ENCODE measurements at regions of chr19 and their contacts with region 1.

Region 1: DNA sequence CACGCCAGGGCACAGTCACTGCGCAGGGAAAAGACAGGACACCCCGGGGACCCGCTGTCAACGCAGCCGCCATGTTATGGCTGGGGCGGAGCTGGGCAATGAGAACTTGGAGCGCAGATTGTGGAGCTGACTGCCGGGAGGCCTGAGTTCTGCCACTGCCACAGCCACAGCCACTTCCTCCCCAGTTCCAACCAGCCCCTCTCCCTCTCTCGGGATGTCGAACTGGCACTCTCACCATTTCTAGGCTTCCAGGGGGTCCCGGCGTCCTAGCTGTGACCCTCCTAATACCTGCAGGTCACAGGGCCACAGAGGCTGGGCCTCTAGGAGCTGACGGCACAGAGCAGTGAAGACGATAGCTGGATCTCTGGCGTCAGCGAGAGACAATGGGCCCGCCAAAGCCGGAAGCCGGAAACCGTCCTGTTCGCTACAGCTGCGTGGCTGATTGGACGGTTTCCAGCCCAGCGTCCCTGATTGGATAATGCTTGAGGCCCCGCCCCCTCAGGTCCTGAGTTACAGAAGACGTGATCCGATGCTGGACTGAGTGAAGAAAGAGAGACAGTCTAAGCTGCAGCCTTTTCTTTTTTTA is at the start of gene ZNF506:
- DNase-seq: peak; percentile 91 to 99 (median 98)
- ATAC-seq: peak; percentile 81 to 82
- H3K4me3 Mint-ChIP-seq: peak within 1 kb of the TSS; percentile 99 to 100 (median 100)
- H3K27ac Mint-ChIP-seq: peak within 1 kb of the TSS; percentile 98 to 100 (median 100)
- H3K4me1 Mint-ChIP-seq: peaks cover 6 to 48% (median 37%) of the 10 kb centered on the region in 4 donors
- H3K27me3 Mint-ChIP-seq: no peaks in the 10 kb centered on the region
- polyA plus RNA-seq, gene ZNF506: 23.4 to 29.6 (median 27.8) TPM

Region 2: DNA sequence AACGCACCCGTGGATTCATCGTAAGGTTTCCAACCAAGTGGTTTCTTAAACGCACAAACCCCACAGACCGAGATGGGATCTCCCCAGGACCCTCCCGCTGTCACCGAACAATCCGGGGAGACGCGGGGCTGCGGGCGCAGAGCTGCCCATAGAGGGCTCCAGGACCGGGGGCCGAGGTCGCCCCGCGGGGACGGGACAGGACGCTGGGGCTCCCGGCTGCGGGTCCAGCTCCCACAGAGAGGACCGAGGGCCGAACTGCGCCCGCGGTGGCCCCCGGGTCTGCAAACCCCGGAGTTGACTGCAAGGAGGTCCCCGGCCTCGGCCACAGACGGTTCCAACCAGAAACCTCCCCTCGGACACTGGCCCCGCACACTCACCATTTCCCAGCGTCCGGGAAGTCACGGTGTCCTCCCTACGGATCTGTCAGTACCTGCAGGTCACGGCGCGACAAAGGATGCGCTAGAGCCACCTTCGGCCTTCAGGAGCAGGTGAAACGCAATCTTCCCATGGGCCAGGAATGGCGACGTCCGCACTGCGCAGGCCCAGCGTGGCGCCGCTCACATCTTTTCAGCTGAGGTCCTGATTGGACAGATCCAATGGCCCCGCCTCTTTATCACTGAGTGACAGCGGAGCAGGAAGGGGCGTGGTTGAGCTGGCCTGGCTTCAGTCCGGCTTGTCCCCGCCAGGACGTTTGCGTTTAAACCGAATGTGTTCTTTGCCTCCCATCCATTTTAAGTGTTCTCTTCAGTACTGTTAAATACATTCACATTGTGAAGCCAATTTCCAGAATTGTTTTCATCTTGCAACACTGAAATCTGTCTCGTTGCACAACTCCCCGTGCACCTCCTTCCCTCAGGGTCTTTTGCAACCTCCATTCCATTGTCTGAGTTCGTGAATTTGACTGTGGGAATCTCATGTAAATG is 88.6 kb before region 1 on chr19 and contains the start of gene ZNF14:
- POLR2A ChIA-PET with region 1: interaction called, 55 read pairs
- DNase-seq: peak; percentile 79 to 96 (median 89)
- ATAC-seq: peak; percentile 96 to 99
- H3K4me3 Mint-ChIP-seq: peak within 1 kb of the TSS; percentile 94 to 100 (median 98)
- H3K27ac Mint-ChIP-seq: peak within 1 kb of the TSS; percentile 89 to 99 (median 98)
- H3K4me1 Mint-ChIP-seq: peaks cover 7 to 38% (median 27%) of the 10 kb centered on the region in 4 donors
- H3K27me3 Mint-ChIP-seq: no peaks in the 10 kb centered on the region
- polyA plus RNA-seq, gene ZNF14: 8.2 to 16.3 (median 11.4) TPM

Region 3: DNA sequence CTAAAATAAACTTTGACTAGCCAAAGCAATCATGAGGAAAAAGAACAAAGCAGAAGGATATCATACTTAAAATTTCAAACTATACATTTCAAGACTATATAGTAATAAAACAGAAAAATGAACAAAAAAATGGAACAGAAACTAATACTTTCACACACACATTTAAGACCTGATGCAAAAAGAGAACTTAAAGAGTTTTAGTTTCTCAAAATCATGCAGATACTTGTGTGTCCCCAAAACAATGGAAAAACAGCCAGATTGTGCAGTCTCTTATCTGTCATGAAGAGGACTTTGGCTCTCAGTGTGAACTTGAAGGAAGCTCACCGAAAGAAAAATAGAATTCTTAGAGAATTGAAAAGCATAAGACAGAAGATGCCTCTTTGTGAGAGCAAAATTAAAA is 16.0 kb before region 1 on chr19:
- POLR2A ChIA-PET with region 1: interaction called, 23 read pairs
- DNase-seq: no peak
- ATAC-seq: no peak
- H3K4me3 Mint-ChIP-seq: peak overlapping the region in 1 of 10 donors; percentile 32
- H3K27ac Mint-ChIP-seq: peak overlapping the region in 6 of 10 donors; percentile 22 to 46 (median 33)
- H3K4me1 Mint-ChIP-seq: peaks cover 6 to 33% (median 25%) of the 10 kb centered on the region in 4 donors
- H3K27me3 Mint-ChIP-seq: no peaks in the 10 kb centered on the region

Region 4: DNA sequence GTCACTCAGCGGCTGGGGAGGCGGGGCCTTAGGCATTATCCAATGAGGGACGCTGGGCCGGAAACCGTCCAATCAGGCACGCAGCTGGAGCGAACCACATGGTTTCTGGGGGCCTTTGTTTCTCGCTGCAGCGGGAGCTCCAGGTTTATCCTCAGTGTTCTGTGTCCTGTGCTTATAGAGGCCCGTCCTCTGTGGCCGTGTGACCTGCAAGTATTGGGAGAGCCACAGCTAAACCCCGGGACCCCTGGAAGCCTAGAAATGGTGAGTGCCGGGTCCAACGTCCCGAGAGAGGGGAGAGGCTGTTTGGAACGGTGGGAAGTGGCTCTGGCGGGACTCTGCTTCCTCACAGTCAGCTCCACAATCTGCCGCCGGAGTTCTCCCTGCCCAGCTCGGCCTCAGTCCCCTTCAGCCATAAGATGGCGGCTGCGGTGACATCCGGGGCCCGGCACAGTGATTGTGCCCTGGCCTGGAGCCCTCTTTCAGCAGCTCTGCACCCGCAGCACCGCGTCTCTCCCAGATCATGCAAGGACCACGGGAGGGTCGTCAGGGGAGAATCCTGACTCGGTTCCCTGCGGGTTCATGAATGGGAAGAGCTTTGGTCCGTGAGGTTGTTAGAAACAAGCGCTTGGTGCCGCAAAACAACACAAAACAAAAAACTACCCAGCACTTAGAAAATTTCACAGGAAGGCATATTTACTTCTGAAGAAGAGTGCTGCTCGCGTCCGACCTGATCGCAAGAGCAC is 44.5 kb after region 1 on chr19 and contains the start of gene ZNF253:
- POLR2A ChIA-PET with region 1: interaction called, 136 read pairs
- DNase-seq: peak; percentile 84 to 97 (median 93)
- ATAC-seq: peak; percentile 89 to 91
- H3K4me3 Mint-ChIP-seq: peak within 1 kb of the TSS; percentile 99 to 100 (median 100)
- H3K27ac Mint-ChIP-seq: peak within 1 kb of the TSS; percentile 96 to 99 (median 99)
- H3K4me1 Mint-ChIP-seq: peaks cover 8 to 42% (median 31%) of the 10 kb centered on the region in 4 donors
- H3K27me3 Mint-ChIP-seq: no peaks in the 10 kb centered on the region
- polyA plus RNA-seq, gene ZNF253: 7.1 to 9.4 (median 8.9) TPM

Region 5: GRCh38 chr19:19900729-19901444 is 79.4 kb after region 1 on chr19 and contains the start of gene ZNF93:
- POLR2A ChIA-PET with region 1: interaction called, 34 read pairs
- DNase-seq: peak; percentile 68 to 96 (median 91)
- ATAC-seq: peak; percentile 95 to 97
- H3K4me3 Mint-ChIP-seq: peak within 1 kb of the TSS; percentile 92 to 100 (median 96)
- H3K27ac Mint-ChIP-seq: peak within 1 kb of the TSS; percentile 80 to 98 (median 95)
- H3K4me1 Mint-ChIP-seq: peaks cover 20 to 39% (median 34%) of the 10 kb centered on the region in 4 donors
- H3K27me3 Mint-ChIP-seq: no peaks in the 10 kb centered on the region
- polyA plus RNA-seq, gene ZNF93: 7.7 to 11.5 (median 11.2) TPM